ENCODE measurements at regions of chr3 and their contacts with region 1.

Region 1: GRCh38 chr3:26089249-26089648 is 299.4 kb downstream of the OXSM start:
- DNase-seq: no peak
- H3K4me3 Mint-ChIP-seq: no peak overlapping the region
- H3K27ac Mint-ChIP-seq: no peak overlapping the region
- H3K4me1 Mint-ChIP-seq: no peaks in the 10 kb centered on the region
- H3K27me3 Mint-ChIP-seq: no peaks in the 10 kb centered on the region

Region 2: GRCh38 chr3:25782938-25783660 is 306.1 kb before region 1 on chr3 and contains the start of gene NGLY1:
- CTCF ChIA-PET with region 1: no interaction called
- intact Hi-C with region 1: no loop called
- DNase-seq: peak; percentile 87
- H3K4me3 Mint-ChIP-seq: peak within 1 kb of the TSS; percentile 88
- H3K27ac Mint-ChIP-seq: peak within 1 kb of the TSS; percentile 88
- H3K4me1 Mint-ChIP-seq: peaks cover 40% of the 10 kb centered on the region
- H3K27me3 Mint-ChIP-seq: no peaks in the 10 kb centered on the region
- total RNA-seq, gene NGLY1: 49.0 to 50.0 TPM

Region 3: DNA sequence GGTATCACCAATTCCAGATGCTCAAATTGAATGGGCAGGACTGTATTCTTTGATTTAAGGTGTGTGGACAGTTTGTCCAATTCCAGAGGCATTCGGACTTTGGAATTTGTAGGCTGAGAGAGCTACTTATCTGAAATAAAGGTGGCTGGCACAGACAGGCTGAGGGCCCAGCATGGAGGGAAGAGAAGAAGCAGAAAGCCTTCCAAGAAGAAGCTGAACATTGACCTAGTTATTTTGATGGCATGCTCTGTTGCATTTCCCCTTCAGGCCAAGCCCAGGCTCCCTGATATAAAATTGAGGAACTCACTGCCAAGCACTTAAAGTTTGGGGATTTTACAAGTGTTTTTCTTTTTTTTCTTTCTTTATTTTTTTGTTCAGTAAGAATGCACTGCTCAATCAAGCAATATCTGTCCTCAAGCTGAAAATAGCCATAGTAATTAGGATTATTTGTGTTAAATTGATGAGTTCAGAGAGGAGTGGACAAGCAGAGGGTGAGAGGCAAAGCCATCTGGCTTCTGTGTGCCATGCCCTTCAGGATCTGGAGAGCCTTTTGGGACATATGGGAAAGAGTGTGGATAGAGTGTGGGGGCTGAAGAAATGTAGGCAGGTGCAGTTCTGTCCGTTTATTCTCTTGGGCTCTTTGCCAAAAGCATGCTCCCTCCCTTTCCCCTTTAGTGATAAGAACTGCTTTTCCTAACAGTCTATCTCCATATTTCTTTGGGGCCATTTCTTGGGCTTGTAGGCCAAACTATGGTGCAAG is 150.5 kb before region 1 on chr3:
- CTCF ChIA-PET with region 1: no interaction called
- intact Hi-C with region 1: no loop called
- DNase-seq: no peak
- H3K4me3 Mint-ChIP-seq: no peak overlapping the region
- H3K27ac Mint-ChIP-seq: no peak overlapping the region
- H3K4me1 Mint-ChIP-seq: no peaks in the 10 kb centered on the region
- H3K27me3 Mint-ChIP-seq: peaks cover 2% of the 10 kb centered on the region

Region 4: GRCh38 chr3:26104851-26105251 is 15.6 kb after region 1 on chr3:
- CTCF ChIA-PET with region 1: interaction called, 10 read pairs
- intact Hi-C with region 1: no loop called
- DNase-seq: no peak
- H3K4me3 Mint-ChIP-seq: no peak overlapping the region
- H3K27ac Mint-ChIP-seq: no peak overlapping the region
- H3K4me1 Mint-ChIP-seq: no peaks in the 10 kb centered on the region
- H3K27me3 Mint-ChIP-seq: no peaks in the 10 kb centered on the region

Measured in activated naive CD4-positive, alpha-beta T cell treated with anti-CD3 and anti-CD28 coated beads for 36 hours (primary cell).